WTC11 (cell line): ENCODE measurements at regions of chr22 and their contacts with region 1.

Region 1: DNA sequence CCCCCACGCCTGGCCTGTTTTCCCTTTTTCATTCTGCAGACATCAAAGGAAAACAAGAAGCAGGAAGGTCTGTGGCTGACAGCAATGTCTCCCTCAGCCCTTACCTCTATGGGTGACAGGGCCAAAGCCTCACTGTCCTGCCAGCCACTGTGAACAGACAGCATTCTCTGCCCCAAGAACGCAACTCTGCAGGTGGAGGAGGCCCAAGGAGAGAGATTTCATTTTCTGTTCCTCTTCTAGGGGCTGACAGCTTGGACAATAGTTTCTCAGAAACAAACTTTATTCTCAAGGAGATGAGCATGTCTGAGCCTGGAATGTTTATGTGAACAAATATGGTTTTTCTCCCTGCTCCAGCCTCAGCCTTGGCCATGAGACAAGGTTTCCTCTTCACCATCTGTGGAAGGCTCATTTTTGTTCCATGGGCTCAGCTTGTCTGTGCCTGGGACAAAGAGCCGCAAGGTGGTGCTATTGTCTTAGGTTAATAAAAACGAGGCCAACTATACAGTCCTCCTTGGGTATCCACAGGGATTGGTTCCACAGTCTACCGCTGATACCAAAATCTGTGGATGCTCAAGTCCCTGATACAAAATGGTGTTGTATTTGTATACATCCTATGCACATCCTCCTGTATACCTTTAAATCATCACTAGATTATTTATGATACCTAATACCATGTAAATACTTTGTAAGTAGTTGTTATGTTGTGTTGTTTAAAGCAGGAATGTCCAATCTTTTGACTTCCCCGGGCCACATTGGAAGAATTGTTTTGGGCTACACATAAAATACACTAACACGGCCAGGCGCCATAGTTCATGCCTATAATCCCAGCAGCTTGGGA is 5.8 kb downstream of the PIWIL3 start:
- DNase-seq: peak; percentile 72
- ATAC-seq: peak; percentile 73
- H3K4me3 Mint-ChIP-seq: no peak overlapping the region
- H3K27ac Mint-ChIP-seq: no peak overlapping the region; the same call in 1 of the 2 replicates
- H3K4me1 Mint-ChIP-seq: peaks cover 15% of the 10 kb centered on the region
- H3K27me3 Mint-ChIP-seq: no peaks in the 10 kb centered on the region; the same call in 1 of the 2 replicates
- CTCF ChIP-seq: peak; percentile 47

Region 2: DNA sequence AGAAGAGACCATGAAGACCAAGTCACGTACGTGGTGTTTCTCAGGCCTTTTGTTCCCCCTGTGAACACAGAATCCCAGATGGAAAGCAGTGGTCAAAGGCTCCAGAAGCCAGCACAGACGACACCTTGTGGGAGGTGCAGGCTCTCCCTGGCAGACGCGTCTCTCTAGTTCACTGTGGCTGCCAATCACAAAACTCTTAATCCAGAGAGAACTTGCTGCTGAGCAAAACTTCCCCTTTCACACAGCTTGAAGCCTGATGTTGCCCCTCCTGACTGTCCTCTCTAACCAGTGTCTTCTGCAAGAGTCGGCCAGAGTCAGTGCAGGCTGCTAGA is 61.3 kb before region 1 on chr22:
- CTCF ChIA-PET with region 1: interaction called, 11 read pairs
- POLR2A ChIA-PET with region 1: no interaction called
- DNase-seq: no peak
- ATAC-seq: peak; percentile 76
- H3K4me3 Mint-ChIP-seq: no peak overlapping the region
- H3K27ac Mint-ChIP-seq: no peak overlapping the region
- H3K4me1 Mint-ChIP-seq: peaks cover 26% of the 10 kb centered on the region
- H3K27me3 Mint-ChIP-seq: no peaks in the 10 kb centered on the region; the same call in 1 of the 2 replicates
- CTCF ChIP-seq: no peak

Region 3: DNA sequence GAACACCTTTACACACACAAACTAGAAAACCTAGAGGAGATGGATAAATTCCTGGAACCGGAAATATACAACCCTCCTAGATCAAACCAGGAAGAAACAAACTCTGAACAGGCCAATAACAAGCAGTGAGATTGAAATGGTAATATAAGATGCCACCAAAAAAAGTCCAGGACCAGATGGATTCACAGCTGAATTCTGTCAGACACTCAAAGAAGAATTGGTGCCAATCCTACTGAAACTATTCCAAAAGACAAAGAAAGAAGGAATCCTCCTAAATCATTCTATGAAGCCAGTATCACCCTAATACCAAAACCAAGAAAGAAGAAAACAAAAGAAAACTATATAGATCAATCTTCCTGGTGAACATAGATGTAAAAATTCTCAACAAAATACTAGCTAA is 28.1 kb before region 1 on chr22:
- CTCF ChIA-PET with region 1: no interaction called
- POLR2A ChIA-PET with region 1: no interaction called
- DNase-seq: no peak
- ATAC-seq: no peak
- H3K4me3 Mint-ChIP-seq: no peak overlapping the region
- H3K27ac Mint-ChIP-seq: no peak overlapping the region
- H3K4me1 Mint-ChIP-seq: peaks cover 9% of the 10 kb centered on the region
- H3K27me3 Mint-ChIP-seq: peaks cover 2% of the 10 kb centered on the region
- CTCF ChIP-seq: no peak

Region 4: DNA sequence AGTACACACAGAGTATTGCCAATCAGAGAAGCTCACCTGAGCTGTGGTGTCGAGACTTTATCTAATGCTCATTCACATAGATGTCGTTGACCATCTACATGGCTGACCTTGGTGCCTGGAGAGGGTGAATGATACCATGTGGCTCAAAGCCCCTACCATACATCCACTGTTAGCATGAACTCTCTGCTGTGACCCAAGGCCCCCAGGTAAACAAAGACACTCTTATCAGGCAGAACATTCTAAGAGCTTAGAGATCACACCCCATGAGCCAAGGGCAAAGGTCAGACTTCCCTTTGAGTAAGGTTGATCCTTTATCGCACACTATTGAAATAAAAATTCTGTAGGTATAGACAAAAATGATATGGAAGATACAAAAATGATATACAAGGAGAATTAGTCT is 20.8 kb after region 1 on chr22:
- CTCF ChIA-PET with region 1: interaction called, 13 read pairs
- POLR2A ChIA-PET with region 1: no interaction called
- DNase-seq: no peak
- ATAC-seq: no peak
- H3K4me3 Mint-ChIP-seq: no peak overlapping the region
- H3K27ac Mint-ChIP-seq: no peak overlapping the region
- H3K4me1 Mint-ChIP-seq: no peaks in the 10 kb centered on the region
- H3K27me3 Mint-ChIP-seq: peaks cover 3% of the 10 kb centered on the region; the same call in 1 of the 2 replicates
- CTCF ChIP-seq: no peak

Region 5: DNA sequence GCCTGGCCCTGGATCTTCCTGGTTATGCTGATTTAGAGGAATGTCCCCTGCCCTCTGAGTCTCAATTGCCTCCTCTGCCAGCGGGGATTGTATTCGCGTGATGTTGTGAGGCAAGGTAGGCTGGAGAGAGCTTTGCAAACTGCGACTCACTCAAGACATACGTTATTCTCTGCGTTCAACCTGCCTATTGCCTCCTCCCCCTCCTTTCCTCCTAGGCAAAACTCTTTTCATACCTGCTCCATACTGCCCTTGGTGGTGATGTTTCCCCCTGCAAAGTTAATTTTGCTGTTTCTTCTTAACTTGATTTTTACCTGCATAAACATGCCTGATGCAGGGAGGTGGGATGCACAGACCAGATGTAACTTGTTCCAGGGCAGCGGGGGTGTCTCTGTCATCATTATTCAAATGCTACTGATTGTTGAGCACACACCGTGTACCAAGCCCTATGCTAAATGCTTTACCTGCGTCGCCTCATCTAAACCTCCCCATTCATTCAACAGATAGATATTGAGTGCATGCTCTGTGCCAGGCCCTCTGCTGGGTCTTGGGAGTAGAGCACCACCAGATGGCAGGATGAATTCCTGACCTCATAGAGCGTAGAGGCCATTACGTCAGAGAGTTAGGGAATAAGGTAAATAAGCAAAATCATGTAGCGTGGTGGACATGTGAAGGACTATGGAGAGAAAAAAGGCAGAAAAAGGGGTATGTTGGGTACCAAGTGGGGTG is 66.3 kb after region 1 on chr22:
- CTCF ChIA-PET with region 1: interaction called, 13 read pairs
- POLR2A ChIA-PET with region 1: no interaction called
- DNase-seq: peak; percentile 45
- ATAC-seq: peak; percentile 93
- H3K4me3 Mint-ChIP-seq: no peak overlapping the region
- H3K27ac Mint-ChIP-seq: peak overlapping the region; percentile 29
- H3K4me1 Mint-ChIP-seq: peaks cover 29% of the 10 kb centered on the region
- H3K27me3 Mint-ChIP-seq: no peaks in the 10 kb centered on the region
- CTCF ChIP-seq: 0 out of 2 replicates have a peak, but pooled peaks have one; percentile 16

Region 6: GRCh38 chr22:24926849-24927579 is 158.3 kb after region 1 on chr22:
- CTCF ChIA-PET with region 1: interaction called, 10 read pairs
- POLR2A ChIA-PET with region 1: interaction called, 3 read pairs
- DNase-seq: no peak
- ATAC-seq: no peak
- H3K4me3 Mint-ChIP-seq: no peak overlapping the region
- H3K27ac Mint-ChIP-seq: no peak overlapping the region
- H3K4me1 Mint-ChIP-seq: peaks cover 13% of the 10 kb centered on the region
- H3K27me3 Mint-ChIP-seq: no peaks in the 10 kb centered on the region; the same call in 1 of the 2 replicates
- CTCF ChIP-seq: no peak